ENCODE measurements at regions of chr2 and their contacts with region 1.

Region 1: GRCh38 chr2:130920415-130921163 is 83.9 kb downstream of the ARHGEF4 start:
- DNase-seq: peak; percentile 76
- H3K4me3 Mint-ChIP-seq: no peak overlapping the region
- H3K27ac Mint-ChIP-seq: no peak overlapping the region
- H3K4me1 Mint-ChIP-seq: no peaks in the 10 kb centered on the region
- H3K27me3 Mint-ChIP-seq: peaks cover 12% of the 10 kb centered on the region

Region 2: DNA sequence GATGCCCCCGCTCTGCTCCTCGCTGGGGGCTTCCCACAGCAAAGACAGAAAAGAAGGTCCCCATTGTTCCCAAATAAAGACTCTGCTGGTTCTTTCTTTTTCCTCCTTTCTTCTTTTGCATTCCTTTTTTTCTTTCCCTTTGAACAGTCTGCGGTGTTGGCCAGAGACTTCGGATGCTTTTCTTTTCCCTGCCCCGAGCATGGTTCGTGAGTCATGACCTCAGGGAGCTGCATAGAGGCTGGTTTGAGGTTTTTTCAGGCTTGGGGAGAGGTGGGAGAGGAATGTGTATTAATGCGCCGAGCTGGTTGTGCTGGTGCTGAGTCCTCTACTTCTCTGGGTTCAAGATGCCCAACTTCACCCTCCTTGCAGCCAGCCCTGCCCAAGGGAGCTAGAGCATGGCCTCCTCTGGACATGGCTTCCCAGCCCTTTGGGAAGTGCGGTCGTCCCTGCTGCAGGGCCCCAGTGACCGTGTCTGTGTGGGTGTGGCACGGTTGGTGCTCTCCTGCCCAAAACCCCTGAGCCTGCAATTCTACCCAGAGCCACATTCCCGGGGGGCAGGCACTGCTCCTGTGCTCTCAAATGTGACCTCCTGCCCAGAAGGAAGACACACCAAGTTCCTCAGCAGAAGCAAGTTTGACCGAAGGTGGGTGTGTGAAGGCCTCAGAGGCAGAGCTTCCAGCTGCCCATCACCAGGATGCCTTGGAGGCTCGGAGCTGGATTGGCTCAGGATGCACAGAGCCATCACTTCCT is 92.9 kb before region 1 on chr2:
- CTCF ChIA-PET with region 1: no interaction called
- intact Hi-C with region 1: no loop called
- DNase-seq: no peak
- H3K4me3 Mint-ChIP-seq: no peak overlapping the region
- H3K27ac Mint-ChIP-seq: no peak overlapping the region
- H3K4me1 Mint-ChIP-seq: peaks cover 19% of the 10 kb centered on the region
- H3K27me3 Mint-ChIP-seq: peaks cover 8% of the 10 kb centered on the region

Region 3: DNA sequence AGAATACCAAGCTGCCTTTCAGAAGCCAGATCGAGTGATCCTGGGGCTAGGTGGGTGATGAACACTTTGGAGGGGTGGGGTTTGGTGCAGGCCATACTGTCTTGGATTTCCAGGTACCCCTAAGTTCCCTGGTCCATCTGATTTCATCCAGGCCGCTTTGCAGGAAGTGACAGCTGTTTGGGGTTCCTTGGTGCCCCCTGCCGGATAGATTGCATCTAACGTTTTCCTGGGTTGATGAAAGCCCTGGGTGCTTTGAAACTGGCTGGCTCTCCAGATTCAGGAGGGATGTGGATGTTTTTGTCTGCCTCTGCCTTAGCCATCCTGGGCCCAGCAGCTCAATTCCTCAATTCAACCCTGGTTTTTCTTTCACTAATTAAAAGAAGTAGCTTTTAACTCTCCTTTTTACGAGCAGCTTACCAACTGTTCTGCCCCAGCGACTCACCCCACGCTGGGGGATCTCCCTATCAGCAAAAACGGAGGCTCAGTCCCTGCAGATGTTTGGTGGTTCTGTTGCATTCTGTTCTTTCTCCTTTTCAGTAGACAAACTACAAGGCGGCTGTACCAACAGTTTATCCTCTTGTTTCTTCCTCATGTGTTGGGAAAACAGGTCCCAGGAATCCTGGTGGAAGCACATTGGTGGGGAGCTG is 46.8 kb before region 1 on chr2:
- CTCF ChIA-PET with region 1: interaction called, 4 read pairs
- intact Hi-C with region 1: loop called (anchors 1 kb)
- DNase-seq: peak; percentile 86
- H3K4me3 Mint-ChIP-seq: no peak overlapping the region
- H3K27ac Mint-ChIP-seq: no peak overlapping the region
- H3K4me1 Mint-ChIP-seq: no peaks in the 10 kb centered on the region
- H3K27me3 Mint-ChIP-seq: peaks cover 5% of the 10 kb centered on the region

Region 4: GRCh38 chr2:130896813-130897212 is 23.8 kb before region 1 on chr2:
- CTCF ChIA-PET with region 1: no interaction called
- intact Hi-C with region 1: loop called (anchors 2 kb)
- DNase-seq: no peak
- H3K4me3 Mint-ChIP-seq: no peak overlapping the region
- H3K27ac Mint-ChIP-seq: no peak overlapping the region
- H3K4me1 Mint-ChIP-seq: no peaks in the 10 kb centered on the region
- H3K27me3 Mint-ChIP-seq: peaks cover 13% of the 10 kb centered on the region

Measured in activated naive CD4-positive, alpha-beta T cell treated with anti-CD3 and anti-CD28 coated beads for 36 hours (primary cell).